ENCODE measurements at regions of chr7 and their contacts with region 1.

Region 1: DNA sequence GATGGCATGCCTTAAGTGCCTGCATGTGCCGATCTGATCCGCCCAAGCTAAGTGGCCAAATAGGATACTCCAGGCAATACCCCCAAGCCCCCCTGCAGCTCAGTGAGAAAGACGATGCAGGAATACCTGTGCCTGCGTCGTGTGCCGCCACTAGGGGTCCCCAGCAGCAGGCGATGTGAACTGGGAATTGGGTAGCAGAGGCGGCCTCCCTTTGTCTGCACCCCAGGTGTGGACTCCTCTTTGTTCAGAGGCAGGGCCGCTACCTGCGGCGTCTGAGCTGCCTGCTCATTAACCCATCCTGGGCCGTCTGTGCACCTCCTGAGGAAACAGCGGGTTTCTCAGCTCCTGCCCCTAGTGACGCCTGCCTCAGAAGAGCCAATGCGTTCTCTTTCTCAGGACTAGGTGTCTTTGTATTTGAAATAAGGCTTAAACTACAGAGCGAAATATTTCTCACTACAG is 4.8 kb upstream of the CHN2 start:
- H3K4me3 Mint-ChIP-seq: no peak overlapping the region
- H3K27ac Mint-ChIP-seq: no peak overlapping the region
- H3K4me1 Mint-ChIP-seq: peaks cover 34% of the 10 kb centered on the region
- H3K27me3 Mint-ChIP-seq: peaks cover 20% of the 10 kb centered on the region

Region 2: GRCh38 chr7:28926871-28927597 is 262.7 kb before region 1 on chr7:
- intact Hi-C with region 1: loop called (anchors 10 kb)
- H3K4me3 Mint-ChIP-seq: peak overlapping the region; percentile 75
- H3K27ac Mint-ChIP-seq: peak overlapping the region; percentile 53
- H3K4me1 Mint-ChIP-seq: peaks cover 27% of the 10 kb centered on the region
- H3K27me3 Mint-ChIP-seq: peaks cover 33% of the 10 kb centered on the region

Region 3: DNA sequence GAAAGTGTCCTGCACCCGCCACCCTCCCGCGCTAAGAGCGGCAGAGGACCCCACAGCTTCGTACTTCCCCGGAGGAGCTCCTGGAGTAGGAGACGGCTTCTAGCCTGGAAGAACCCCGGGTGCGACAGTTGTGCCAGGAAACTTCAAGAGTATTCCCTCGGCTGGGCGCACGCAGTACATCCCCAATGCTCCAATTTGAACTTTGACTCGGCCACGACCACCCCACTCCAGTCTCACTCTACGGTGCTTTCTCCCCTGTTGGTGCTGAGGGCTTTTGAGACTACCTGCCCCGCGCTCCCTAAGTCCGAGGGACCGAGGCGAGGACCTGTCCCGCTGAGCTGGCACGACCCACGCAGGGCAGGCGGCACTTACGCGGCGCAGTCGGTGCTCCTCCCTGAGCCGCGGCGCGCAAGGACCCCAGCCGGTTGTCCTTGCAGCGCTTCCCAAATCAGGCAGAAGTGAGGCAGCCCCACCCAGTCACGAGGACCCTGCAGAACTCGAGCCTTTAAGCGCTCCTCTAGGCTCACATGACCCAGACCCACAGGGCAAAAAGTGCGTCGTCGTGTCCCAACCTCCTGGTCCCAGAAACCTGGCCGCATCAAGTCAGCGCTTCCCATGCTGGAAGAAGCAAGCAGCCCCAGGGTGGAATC is 43.6 kb before region 1 on chr7 and contains the start of gene CPVL:
- intact Hi-C with region 1: loop called (anchors 5 kb)
- H3K4me3 Mint-ChIP-seq: peak within 1 kb of the TSS; percentile 98
- H3K27ac Mint-ChIP-seq: peak within 1 kb of the TSS; percentile 93
- H3K4me1 Mint-ChIP-seq: peaks cover 67% of the 10 kb centered on the region
- H3K27me3 Mint-ChIP-seq: no peaks in the 10 kb centered on the region

Region 4: DNA sequence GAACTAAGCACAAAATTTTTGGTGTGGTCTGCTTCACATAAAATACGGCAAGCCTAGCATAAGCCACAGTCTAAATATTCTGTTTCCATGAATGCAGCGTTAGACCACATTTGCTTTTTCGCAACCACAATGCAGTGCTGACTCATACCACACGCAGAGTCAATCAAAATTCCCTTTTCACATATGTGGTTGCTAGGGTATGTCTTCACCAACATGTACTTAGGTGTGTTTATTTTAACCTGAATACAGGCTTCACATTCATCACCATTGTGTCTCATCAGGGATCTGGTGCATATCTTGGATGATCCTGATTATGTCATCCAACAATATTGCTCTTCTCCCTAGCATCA is 95.6 kb after region 1 on chr7:
- intact Hi-C with region 1: loop called (anchors 5 kb)
- H3K4me3 Mint-ChIP-seq: no peak overlapping the region
- H3K27ac Mint-ChIP-seq: peak overlapping the region; percentile 75
- H3K4me1 Mint-ChIP-seq: peaks cover 83% of the 10 kb centered on the region
- H3K27me3 Mint-ChIP-seq: no peaks in the 10 kb centered on the region

Region 5: DNA sequence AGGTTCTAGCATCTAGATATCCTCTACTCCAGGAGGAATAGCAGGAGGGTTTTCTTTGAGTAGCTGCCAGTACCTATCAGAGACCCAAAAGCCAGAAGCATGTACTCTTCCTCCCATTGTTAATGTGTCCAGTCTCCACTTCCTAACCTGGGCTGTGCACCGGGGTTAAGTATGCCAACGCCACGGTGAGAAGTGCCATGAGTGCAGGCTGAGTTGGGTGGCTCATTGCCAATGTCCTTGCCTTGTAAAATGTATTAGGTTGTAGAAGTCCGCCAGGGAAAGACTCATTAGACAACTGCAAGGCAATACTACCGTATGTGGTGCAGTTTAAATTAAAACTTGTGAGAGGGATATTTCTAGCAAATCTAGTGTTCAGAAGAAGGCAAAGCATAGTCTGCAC is 318.8 kb after region 1 on chr7:
- intact Hi-C with region 1: no loop called
- H3K4me3 Mint-ChIP-seq: no peak overlapping the region
- H3K27ac Mint-ChIP-seq: no peak overlapping the region
- H3K4me1 Mint-ChIP-seq: peaks cover 7% of the 10 kb centered on the region
- H3K27me3 Mint-ChIP-seq: no peaks in the 10 kb centered on the region